ENCODE measurements at regions of chr3 and their contacts with region 1.

Region 1: GRCh38 chr3:111636366-111636885 is 41.3 kb upstream of the ZBED2 start:
- DNase-seq: no peak
- H3K4me3 ChIP-seq: no peak overlapping the region
- CTCF ChIP-seq: no peak
- POLR2A ChIP-seq: no peak

Region 2: DNA sequence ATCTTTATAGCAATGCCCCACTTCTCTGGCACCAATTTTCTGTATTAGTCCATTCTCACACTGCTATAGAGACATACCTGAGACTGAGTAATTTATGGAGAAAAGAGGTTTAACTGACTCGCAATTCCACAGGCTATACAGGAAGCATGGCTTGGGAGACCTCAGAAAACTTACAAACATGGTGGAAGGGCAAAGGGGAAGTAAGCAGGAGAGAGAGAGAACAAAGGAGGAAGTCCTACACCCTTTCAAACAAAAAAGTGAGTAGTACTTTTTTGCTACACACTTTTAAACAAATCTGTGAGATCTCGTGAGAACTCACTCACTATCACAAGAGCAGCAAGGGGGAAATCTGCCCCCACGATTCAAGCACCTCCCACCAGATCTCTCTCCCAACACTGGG is 26.5 kb after region 1 on chr3:
- intact Hi-C with region 1: loop called (anchors 1 kb)
- DNase-seq: no peak
- H3K4me3 ChIP-seq: no peak overlapping the region
- CTCF ChIP-seq: no peak
- POLR2A ChIP-seq: no peak

Region 3: DNA sequence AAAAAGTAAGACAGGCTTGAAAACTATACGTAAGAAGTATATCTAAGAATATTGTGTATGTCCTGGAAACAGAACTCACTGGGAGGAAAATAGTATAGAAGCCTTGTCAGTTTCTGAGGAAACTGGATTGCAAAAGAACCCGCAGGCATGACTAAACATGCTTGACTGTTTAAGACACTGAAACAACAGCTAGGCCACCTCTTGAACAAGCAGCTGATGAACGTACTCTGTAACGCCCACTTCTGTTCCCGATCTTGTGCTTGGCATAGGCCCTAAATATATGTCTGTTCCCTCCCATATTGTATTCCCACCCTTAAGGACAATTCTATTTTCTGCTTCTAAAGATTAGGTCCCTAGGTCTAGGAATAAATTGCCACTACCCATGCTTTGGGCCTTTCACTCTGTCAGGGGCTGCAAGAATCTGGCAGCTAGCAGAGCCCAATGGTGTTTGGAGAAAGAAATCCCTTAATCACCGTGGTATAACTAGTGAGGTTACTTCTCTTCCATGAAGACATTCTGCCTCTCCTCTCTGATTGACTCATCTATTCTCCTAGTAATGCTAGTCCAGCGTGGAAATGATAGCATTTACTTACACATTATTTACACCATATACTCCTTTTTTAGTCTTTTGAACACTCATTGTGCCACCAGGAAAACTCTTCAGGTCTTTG is 742.7 kb after region 1 on chr3:
- intact Hi-C with region 1: no loop called
- DNase-seq: peak in 1 of 2 donors; percentile 59
- H3K4me3 ChIP-seq: no peak overlapping the region
- CTCF ChIP-seq: no peak
- POLR2A ChIP-seq: no peak

Measured in lower leg skin (tissue), 4 donors.